Endothelial cell of umbilical vein (primary cell): ENCODE measurements at regions of chr9 and their contacts with region 1.

Region 1: DNA sequence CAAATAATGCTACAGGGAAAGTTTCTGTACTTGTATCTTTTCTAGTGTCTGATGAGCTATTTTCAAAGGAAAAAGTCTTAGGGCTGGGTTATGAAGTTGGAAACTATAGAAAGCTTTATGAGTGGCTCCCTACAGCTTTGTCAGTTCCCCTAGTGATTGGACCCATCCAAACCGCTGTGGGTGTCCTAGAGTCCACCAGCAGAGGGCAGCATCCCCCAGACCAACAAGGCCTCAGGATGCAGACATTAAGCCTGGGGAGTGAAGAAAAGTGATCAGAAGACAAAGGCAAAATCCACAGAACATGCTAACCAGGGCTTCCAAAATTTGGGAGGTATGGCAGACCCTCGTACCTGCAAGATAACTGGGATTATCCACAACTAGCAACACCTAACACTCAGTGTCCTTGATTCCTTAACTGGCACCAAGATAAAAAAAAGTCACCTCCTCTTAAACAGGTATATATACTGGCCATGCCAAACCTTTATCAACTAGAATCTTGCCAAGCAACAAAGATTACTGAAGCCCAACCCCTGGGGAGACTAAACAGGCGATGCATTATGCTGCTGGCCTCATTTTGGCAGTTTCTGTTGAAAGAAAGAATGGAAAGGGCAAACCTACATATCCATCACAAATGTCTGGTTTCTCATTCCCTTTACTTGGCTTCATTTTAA is 110.4 kb upstream of the NR5A1 start:
- DNase-seq: peak; percentile 75
- H3K4me3 ChIP-seq: no peak overlapping the region
- H3K27ac ChIP-seq: no peak overlapping the region
- H3K4me1 ChIP-seq: no peaks in the 10 kb centered on the region
- H3K27me3 ChIP-seq: peaks cover 0 to 8% of the 10 kb centered on the region in 2 experiments
- CTCF ChIP-seq: peak; percentile 82 to 89
- POLR2A ChIP-seq: no peak

Region 2: DNA sequence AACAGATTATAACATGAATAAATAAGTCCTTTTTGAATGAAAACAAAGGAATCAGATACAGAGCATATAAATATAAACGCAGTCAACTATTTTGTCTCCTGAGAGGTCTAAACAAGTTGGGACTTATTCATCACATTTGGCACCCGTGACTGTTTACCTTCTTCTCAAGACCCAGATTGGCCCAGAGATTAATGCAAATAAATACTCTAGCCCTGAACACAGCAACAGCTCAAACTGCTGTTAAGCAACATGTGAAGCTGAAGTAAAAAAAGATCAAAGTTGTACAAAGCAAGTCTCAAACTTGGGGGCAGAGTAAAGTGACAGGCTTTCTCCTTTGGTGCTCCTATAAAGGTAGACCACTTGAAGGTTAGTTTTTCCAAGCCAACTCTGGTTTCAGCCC is 15.4 kb before region 1 on chr9:
- CTCF ChIA-PET with region 1: interaction called, 15 read pairs
- POLR2A ChIA-PET with region 1: no interaction called
- dilution Hi-C with region 1: no loop called
- intact Hi-C with region 1: no loop called
- DNase-seq: no peak
- H3K4me3 ChIP-seq: no peak overlapping the region
- H3K27ac ChIP-seq: no peak overlapping the region
- H3K4me1 ChIP-seq: no peaks in the 10 kb centered on the region
- H3K27me3 ChIP-seq: peaks cover 1 to 2% of the 10 kb centered on the region in 2 experiments
- CTCF ChIP-seq: no peak
- POLR2A ChIP-seq: no peak

Region 3: DNA sequence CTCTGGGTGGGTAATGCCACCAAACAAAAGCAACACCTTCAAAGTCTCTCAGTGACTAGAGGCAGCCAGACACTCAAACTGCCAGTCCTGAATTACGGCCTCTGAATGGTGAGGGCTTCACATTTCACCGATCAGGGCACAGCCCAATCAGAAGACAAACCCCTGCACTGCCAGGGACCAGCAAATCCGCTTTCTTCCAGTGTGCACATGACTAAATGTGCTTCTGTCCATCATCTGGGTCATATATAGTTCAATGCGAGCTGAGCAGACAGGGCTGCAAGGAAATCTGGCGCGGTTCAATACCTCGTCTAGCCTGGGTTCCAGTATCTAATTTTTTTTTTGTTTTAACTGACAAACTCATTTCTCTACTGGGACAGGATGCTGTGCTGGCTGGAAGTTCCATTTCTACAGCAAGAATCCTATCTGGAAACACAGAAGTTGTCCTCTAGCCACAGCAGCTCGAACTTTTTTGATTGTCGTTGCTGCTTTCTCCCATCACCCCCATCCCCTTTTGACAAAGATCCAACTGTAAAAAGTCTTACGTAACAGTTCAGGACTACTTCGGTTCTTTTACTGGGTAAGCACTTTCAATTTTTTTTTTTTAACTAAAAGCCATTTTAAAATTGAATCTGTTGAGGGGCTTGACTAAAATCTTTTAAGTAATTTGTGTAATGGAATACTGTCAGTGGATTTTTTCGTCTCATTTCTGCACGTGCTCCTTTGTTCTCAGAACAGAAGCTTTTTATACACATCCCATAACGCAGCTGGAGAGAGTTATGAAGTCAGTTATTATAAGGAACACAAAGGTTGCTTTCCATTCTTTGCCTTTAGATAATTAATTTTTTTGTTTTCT is 40.8 kb after region 1 on chr9:
- CTCF ChIA-PET with region 1: interaction called, 59 read pairs
- POLR2A ChIA-PET with region 1: no interaction called
- dilution Hi-C with region 1: no loop called
- intact Hi-C with region 1: loop called (anchors 1 kb)
- DNase-seq: peak; percentile 95
- H3K4me3 ChIP-seq: peak overlapping the region; percentile 53 to 100 (median 99)
- H3K27ac ChIP-seq: peak overlapping the region; percentile 98
- H3K4me1 ChIP-seq: peaks cover 33% of the 10 kb centered on the region
- H3K27me3 ChIP-seq: no peaks in the 10 kb centered on the region
- CTCF ChIP-seq: no peak
- POLR2A ChIP-seq: peak; percentile 99

Region 4: DNA sequence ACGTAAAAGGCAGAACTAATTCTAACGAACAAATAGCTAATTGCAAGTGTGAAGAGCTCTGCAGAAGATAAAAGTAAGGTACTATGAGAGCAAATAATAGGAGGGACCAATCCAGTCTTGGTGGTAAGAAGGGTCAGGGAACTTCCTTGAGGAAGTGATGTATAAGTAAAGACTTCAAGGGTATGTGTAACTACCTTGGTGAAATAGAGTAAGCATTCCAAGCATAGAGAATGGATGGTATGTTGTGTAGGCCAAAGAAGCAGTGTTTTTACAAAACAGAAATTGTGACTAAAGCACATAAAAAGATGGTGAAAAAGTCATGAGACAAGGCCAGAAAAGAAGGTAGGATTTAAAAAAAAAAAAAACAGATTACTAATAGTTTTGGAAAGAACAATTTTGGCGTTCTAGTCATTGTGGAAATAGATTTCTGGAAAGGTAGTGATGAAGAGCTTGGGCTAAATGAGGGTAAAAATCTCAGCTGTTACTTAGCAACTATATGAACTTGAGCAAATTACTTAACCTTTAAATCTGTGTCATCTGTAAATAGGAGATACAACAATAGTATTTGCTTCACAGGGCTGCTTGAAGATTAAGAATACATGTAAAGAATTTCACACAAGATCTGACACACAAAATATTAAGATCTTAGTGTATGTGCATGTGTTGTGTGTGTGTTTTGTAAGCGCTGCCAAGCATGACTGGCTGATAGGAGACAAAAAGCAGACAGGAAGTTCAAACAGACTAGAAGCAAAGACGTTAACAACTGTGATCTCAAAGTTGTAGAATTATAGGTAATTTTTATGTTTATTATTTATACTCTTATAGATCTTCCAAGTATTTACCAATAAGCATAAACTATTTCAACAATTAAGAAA is 80.0 kb after region 1 on chr9:
- CTCF ChIA-PET with region 1: interaction called, 11 read pairs
- POLR2A ChIA-PET with region 1: interaction called, 6 read pairs
- dilution Hi-C with region 1: no loop called
- intact Hi-C with region 1: no loop called
- DNase-seq: peak; percentile 44
- H3K4me3 ChIP-seq: no peak overlapping the region
- H3K27ac ChIP-seq: peak overlapping the region; percentile 47
- H3K4me1 ChIP-seq: peaks cover 19% of the 10 kb centered on the region
- H3K27me3 ChIP-seq: no peaks in the 10 kb centered on the region
- CTCF ChIP-seq: no peak
- POLR2A ChIP-seq: no peak

Region 5: GRCh38 chr9:124743686-124744348 is 126.2 kb after region 1 on chr9:
- CTCF ChIA-PET with region 1: interaction called, 16 read pairs
- POLR2A ChIA-PET with region 1: no interaction called
- dilution Hi-C with region 1: no loop called
- intact Hi-C with region 1: no loop called
- DNase-seq: no peak
- H3K4me3 ChIP-seq: no peak overlapping the region
- H3K27ac ChIP-seq: no peak overlapping the region
- H3K4me1 ChIP-seq: no peaks in the 10 kb centered on the region
- H3K27me3 ChIP-seq: no peaks in the 10 kb centered on the region
- CTCF ChIP-seq: no peak
- POLR2A ChIP-seq: no peak

Region 6: GRCh38 chr9:124852829-124853531 is 235.4 kb after region 1 on chr9 and contains the start of gene WDR38:
- CTCF ChIA-PET with region 1: interaction called, 9 read pairs
- POLR2A ChIA-PET with region 1: no interaction called
- dilution Hi-C with region 1: no loop called
- intact Hi-C with region 1: loop called (anchors 1 kb)
- DNase-seq: peak; percentile 65
- H3K4me3 ChIP-seq: peak within 1 kb of the TSS; percentile 2 to 38 (median 32)
- H3K27ac ChIP-seq: no peak within 1 kb of the TSS
- H3K4me1 ChIP-seq: peaks cover 3% of the 10 kb centered on the region
- H3K27me3 ChIP-seq: peaks cover 0 to 2% of the 10 kb centered on the region in 2 experiments
- CTCF ChIP-seq: peak; percentile 80 to 94
- POLR2A ChIP-seq: no peak
- total RNA-seq, gene WDR38: not detected in 2 replicates